B cell (primary cell): ENCODE measurements at regions of chr5 and their contacts with region 1.

Region 1: GRCh38 chr5:159262859-159263567 is at the start of gene UBLCP1:
- DNase-seq: peak; percentile 94
- ATAC-seq: peak; percentile 82
- H3K4me3 ChIP-seq: peak within 1 kb of the TSS; percentile 84 to 96 (median 95)
- H3K4me3 Mint-ChIP-seq: peak within 1 kb of the TSS; percentile 96
- H3K27ac ChIP-seq: peak within 1 kb of the TSS; percentile 87 to 88
- H3K27ac Mint-ChIP-seq: peak within 1 kb of the TSS; percentile 97
- H3K4me1 ChIP-seq: peaks cover 17 to 18% of the 10 kb centered on the region in 2 donors
- H3K4me1 Mint-ChIP-seq: peaks cover 32% of the 10 kb centered on the region
- H3K27me3 ChIP-seq: no peaks in the 10 kb centered on the region
- H3K27me3 Mint-ChIP-seq: no peaks in the 10 kb centered on the region
- CTCF ChIP-seq: no peak
- total RNA-seq, gene UBLCP1: 25.1 and 25.5 TPM in 2 replicates

Region 2: DNA sequence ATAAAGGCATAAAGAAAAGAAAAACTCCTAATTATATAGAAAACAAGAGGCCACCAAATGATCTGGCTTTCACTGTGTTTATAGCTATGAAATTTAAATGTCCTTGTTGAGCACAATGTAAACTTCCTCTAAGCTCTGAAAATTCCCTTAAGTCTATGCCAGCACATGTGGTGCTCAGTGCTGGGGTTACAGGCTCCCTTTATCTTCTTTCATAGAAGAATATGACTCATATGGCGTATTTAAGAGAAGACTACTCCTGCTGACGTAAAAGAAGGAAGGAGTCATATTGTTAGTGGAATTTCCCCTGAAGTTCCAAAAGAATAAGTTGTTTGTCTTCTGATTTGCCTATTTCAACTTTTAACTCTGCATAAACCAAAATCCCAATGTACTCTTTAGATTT is 84.0 kb before region 1 on chr5:
- CTCF ChIA-PET with region 1: no interaction called
- POLR2A ChIA-PET with region 1: no interaction called
- intact Hi-C with region 1: loop called (anchors 5 kb)
- DNase-seq: peak; percentile 57
- ATAC-seq: peak; percentile 60
- H3K4me3 ChIP-seq: no peak overlapping the region
- H3K4me3 Mint-ChIP-seq: peak overlapping the region; percentile 45
- H3K27ac ChIP-seq: peak overlapping the region in 1 of 2 donors; percentile 69
- H3K27ac Mint-ChIP-seq: peak overlapping the region; percentile 64
- H3K4me1 ChIP-seq: peaks cover 15 to 34% of the 10 kb centered on the region in 2 donors
- H3K4me1 Mint-ChIP-seq: peaks cover 41% of the 10 kb centered on the region
- H3K27me3 ChIP-seq: no peaks in the 10 kb centered on the region
- H3K27me3 Mint-ChIP-seq: no peaks in the 10 kb centered on the region
- CTCF ChIP-seq: no peak

Region 3: GRCh38 chr5:159198063-159199036 is 64.7 kb before region 1 on chr5:
- CTCF ChIA-PET with region 1: interaction called, 3 read pairs
- POLR2A ChIA-PET with region 1: interaction called, 7 read pairs
- intact Hi-C with region 1: loop called (anchors 2 kb)
- DNase-seq: peak; percentile 80
- ATAC-seq: peak; percentile 97
- H3K4me3 ChIP-seq: no peak overlapping the region
- H3K4me3 Mint-ChIP-seq: peak overlapping the region; percentile 30
- H3K27ac ChIP-seq: peak overlapping the region; percentile 64 to 67
- H3K27ac Mint-ChIP-seq: peak overlapping the region; percentile 76
- H3K4me1 ChIP-seq: peaks cover 26 to 42% of the 10 kb centered on the region in 2 donors
- H3K4me1 Mint-ChIP-seq: peaks cover 49% of the 10 kb centered on the region
- H3K27me3 ChIP-seq: no peaks in the 10 kb centered on the region
- H3K27me3 Mint-ChIP-seq: no peaks in the 10 kb centered on the region
- CTCF ChIP-seq: no peak

Region 4: DNA sequence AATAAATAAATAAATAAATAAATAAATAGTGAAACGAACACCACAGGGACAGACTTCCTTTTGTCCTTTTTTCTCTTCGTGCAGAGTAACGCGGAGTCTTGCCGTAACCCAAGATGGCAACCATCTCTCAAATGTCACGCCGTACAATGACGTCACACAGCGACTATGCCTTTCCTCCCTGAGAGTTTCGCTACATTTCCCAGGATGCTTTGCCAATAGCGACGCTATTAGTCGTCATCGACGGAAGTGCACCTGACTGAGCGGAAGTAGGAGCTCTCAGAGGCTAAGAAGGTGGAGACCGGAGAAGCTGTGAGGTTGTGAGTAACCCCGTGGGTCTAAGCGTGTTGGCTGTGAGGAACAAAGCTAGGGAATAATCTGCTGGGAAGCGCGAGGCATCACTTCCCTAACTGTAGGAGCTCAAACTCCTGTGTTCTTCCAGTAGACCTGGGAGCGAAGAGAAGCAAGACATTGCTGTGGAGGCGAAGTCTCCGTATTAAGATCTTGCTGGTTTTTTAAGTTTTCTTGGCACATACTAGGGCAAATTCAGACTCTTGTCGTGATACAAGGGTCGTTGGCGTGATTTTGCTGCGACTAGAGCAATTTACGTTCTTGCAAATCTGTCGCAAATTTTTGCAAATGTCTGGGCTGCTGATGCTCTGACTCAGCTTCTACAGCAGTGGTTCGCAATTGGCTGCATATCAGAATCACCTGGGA is 746.0 kb after region 1 on chr5 and contains the start of gene TTC1:
- CTCF ChIA-PET with region 1: no interaction called
- POLR2A ChIA-PET with region 1: no interaction called
- intact Hi-C with region 1: loop called (anchors 1 kb)
- DNase-seq: peak; percentile 98
- ATAC-seq: peak; percentile 97
- H3K4me3 ChIP-seq: peak within 1 kb of the TSS; percentile 85 to 100 (median 98)
- H3K4me3 Mint-ChIP-seq: peak within 1 kb of the TSS; percentile 87
- H3K27ac ChIP-seq: peak within 1 kb of the TSS; percentile 77 to 96
- H3K27ac Mint-ChIP-seq: peak within 1 kb of the TSS; percentile 83
- H3K4me1 ChIP-seq: peaks cover 18 to 19% of the 10 kb centered on the region in 2 donors
- H3K4me1 Mint-ChIP-seq: peaks cover 25% of the 10 kb centered on the region
- H3K27me3 ChIP-seq: no peaks in the 10 kb centered on the region
- H3K27me3 Mint-ChIP-seq: no peaks in the 10 kb centered on the region
- CTCF ChIP-seq: no peak
- total RNA-seq, gene TTC1: 37.5 and 40.4 TPM in 2 replicates

Region 5: DNA sequence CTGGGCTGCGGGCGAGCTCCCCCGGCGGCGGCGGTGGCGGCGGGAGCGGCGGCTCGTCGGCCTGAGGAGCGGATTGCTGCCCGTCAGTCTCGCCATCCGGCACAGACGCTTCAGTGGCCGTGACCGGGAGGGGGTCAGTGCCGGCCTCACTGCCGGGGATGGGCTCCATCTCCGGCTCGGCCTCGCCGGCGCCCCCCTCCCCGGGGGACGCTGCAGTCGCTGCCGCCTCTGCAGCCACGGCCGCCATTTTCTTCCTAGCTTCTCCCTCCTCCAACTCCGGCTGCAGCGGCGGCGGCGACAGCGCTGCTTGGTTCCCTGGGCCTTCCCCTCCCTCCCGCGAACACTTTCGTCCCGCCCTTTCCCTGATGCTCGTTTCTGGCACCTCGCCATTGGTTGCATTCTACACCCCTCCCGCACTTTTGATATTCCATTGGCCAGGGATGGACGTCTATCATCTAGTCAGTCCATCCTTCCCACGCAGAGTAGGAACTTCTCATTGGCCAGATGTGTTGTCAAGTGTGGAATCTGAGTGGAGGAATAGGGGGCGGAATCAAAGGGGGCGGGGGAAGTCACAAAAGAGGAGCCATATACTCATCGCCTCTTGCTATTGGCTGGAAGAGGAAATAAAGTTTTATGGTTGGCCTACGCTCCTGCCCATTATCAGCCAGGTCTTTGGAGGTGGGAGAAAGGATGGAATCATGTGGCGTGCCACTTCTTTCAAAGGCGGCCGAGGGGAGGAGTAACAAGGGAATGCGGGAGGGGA is 856.3 kb after region 1 on chr5 and contains the start of gene PWWP2A:
- CTCF ChIA-PET with region 1: no interaction called
- POLR2A ChIA-PET with region 1: no interaction called
- intact Hi-C with region 1: loop called (anchors 2 kb)
- DNase-seq: peak; percentile 99
- ATAC-seq: peak; percentile 90
- H3K4me3 ChIP-seq: peak within 1 kb of the TSS; percentile 56 to 96 (median 72)
- H3K4me3 Mint-ChIP-seq: peak within 1 kb of the TSS; percentile 91
- H3K27ac ChIP-seq: peak within 1 kb of the TSS; percentile 51 to 83
- H3K27ac Mint-ChIP-seq: peak within 1 kb of the TSS; percentile 96
- H3K4me1 ChIP-seq: peaks cover 6 to 7% of the 10 kb centered on the region in 2 donors
- H3K4me1 Mint-ChIP-seq: peaks cover 16% of the 10 kb centered on the region
- H3K27me3 ChIP-seq: no peaks in the 10 kb centered on the region
- H3K27me3 Mint-ChIP-seq: peaks cover 4% of the 10 kb centered on the region
- CTCF ChIP-seq: no peak
- total RNA-seq, gene PWWP2A: 48.8 and 50.1 TPM in 2 replicates